H1 (cell line): ENCODE measurements at regions of chr7 and their contacts with region 1.

Region 1: DNA sequence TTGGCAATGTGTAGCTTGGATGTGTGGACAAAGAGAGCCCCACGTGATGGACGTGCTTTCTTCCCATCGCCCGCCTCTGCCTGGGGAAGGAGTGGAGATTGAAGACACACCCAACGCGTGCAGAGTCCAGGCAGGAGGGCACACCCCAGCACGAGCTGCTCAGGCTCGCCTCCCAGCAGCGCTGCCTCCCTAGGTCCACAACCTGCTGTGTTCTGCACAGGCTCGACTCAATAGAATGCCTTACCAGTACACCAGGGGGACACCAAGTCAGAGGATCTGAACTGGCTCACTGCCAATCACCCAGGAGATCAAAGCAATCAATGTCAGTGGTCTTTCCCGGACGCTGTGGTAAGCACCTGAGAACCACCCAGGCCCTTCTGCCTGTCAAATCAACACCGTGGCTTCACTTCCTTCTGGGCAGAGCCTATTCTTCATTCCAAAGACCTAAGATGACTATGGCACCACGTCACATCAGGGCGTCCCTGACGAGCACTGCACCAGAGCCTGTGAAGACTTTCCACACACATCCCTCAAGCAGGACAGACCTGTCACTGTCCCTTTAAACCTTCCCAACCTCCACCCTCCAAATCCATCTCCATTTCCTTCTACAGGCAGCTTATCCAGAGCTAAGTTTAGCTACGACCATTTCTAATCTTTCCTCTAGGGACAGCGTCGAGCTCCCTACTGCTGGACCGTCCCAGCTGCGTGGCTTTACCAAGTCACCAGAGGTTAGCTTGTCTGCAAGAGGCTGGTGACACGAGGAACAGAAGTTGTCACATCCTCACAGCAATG is 72.3 kb downstream of the AMZ1 start:
- DNase-seq: no peak
- H3K4me3 ChIP-seq: no peak overlapping the region
- H3K27ac ChIP-seq: no peak overlapping the region
- H3K4me1 ChIP-seq: peaks cover 0 to 11% (median 4%) of the 10 kb centered on the region in 4 experiments; a peak in 5 of 7 replicates
- H3K27me3 ChIP-seq: no peaks in the 10 kb centered on the region
- CTCF ChIP-seq: peak; percentile 62 to 91 (median 65)
- EP300 ChIP-seq: no peak
- POLR2A ChIP-seq: no peak
- RAD21 ChIP-seq: peak; percentile 63 to 68

Region 2: DNA sequence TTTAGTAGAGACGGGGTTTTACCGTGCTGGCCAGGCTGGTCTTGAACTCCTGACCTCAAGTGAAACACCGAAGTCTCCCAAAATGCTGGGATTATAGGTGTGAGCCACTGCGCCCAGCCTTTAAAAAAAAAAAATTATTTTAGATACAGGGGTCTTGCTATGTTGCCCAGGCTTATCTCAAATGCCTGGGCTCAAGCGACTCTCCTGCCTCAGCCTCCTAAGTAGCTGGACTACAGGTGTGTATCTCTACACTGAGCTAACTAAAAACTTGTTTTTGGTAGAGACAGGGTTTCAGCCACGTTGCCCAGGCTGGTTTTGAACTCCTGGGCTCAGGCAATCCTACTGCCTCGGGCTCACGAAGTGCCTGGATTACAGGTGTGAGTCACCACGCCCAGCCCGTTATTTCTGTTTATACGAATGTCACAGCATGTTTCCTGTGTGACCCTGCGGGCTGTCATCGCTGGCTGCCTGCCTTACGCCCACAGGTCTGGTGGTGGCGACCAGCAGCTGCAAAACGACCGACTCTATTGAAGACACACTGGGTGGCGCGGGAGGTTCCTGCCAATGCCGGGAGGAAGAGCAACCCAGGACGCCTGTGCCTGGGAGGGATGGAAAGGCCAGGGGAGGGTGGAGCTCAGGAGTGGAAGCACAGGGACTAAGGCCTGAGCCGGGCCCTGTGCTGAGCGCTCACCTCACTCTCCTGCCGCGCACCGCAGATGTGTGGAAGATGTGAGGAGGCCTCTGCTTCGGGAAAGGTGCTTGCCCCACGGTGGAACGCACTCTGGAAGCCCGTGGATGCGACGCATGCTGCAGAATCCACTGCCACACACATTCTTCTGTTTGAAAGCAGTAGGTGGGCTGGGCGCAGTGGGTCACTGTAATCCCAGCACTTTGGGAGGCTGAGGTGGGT is 39.5 kb before region 1 on chr7:
- CTCF ChIA-PET with region 1: interaction called, 18 read pairs
- POLR2A ChIA-PET with region 1: no interaction called
- DNase-seq: no peak
- H3K4me3 ChIP-seq: no peak overlapping the region
- H3K27ac ChIP-seq: no peak overlapping the region
- H3K4me1 ChIP-seq: no peaks in the 10 kb centered on the region; a peak in 4 of 7 replicates
- H3K27me3 ChIP-seq: no peaks in the 10 kb centered on the region
- CTCF ChIP-seq: peak in 2 of 3 experiments; percentile 6 to 14; a peak in 2 of 4 replicates
- EP300 ChIP-seq: no peak
- POLR2A ChIP-seq: no peak
- RAD21 ChIP-seq: peak in 1 of 2 experiments; percentile 40; a peak in 2 of 4 replicates

Region 3: DNA sequence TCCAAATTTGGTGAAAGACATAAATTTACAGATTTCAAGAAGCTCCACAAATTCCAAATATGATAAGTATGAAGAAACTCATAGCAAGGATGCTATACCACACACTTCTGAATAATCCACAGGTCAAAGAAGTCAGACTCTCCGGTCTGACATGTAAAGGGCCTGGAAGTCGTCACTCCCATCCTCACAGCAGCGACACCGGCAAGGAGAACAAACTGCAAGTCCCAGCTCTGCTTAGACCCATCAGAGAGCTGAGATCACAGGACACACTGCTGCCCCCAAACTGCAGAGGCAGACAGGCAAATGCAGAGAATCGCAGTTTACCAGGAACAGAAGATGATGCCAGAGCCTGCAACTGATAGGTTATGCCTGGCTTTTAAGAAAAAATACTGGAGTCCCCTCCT is 10.3 kb before region 1 on chr7:
- CTCF ChIA-PET with region 1: interaction called, 11 read pairs
- POLR2A ChIA-PET with region 1: no interaction called
- DNase-seq: no peak
- H3K4me3 ChIP-seq: no peak overlapping the region
- H3K27ac ChIP-seq: no peak overlapping the region
- H3K4me1 ChIP-seq: no peaks in the 10 kb centered on the region; a peak in 2 of 7 replicates
- H3K27me3 ChIP-seq: no peaks in the 10 kb centered on the region
- CTCF ChIP-seq: no peak
- EP300 ChIP-seq: no peak
- POLR2A ChIP-seq: no peak
- RAD21 ChIP-seq: no peak

Region 4: DNA sequence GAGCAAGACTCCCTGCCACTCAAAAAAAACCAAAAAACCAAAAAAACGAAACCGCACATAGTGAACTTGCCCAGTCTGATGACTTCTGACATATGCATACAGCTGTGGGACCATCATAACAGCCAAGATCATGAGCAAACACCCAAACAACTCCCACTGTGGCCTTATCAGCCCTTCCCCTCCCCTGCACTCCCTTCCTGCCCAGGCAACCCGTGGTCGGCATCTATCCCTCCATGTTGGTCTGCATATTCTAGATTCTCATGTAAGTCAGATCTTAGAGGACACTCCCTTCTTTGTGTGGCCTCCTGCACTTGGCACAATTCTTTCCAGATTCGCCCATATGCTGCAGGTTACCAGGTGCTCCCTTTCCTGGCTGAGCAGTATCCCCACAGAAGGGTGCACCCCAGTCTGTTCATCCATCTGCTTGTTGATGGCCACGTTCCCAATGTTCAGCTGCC is 11.0 kb after region 1 on chr7:
- CTCF ChIA-PET with region 1: interaction called, 14 read pairs
- POLR2A ChIA-PET with region 1: interaction called, 6 read pairs
- DNase-seq: no peak
- H3K4me3 ChIP-seq: no peak overlapping the region
- H3K27ac ChIP-seq: no peak overlapping the region
- H3K4me1 ChIP-seq: 0 out of 7 replicates have a peak, but pooled peaks cover 0 to 2% (median 0%) of the 10 kb centered on the region in 4 experiments
- H3K27me3 ChIP-seq: no peaks in the 10 kb centered on the region
- CTCF ChIP-seq: no peak
- EP300 ChIP-seq: no peak
- POLR2A ChIP-seq: no peak
- RAD21 ChIP-seq: no peak

Region 5: GRCh38 chr7:2779086-2779485 is 18.8 kb after region 1 on chr7:
- CTCF ChIA-PET with region 1: interaction called, 14 read pairs
- POLR2A ChIA-PET with region 1: interaction called, 3 read pairs
- DNase-seq: no peak
- H3K4me3 ChIP-seq: no peak overlapping the region
- H3K27ac ChIP-seq: no peak overlapping the region
- H3K4me1 ChIP-seq: peaks cover 0 to 5% (median 3%) of the 10 kb centered on the region in 4 experiments; a peak in 3 of 7 replicates
- H3K27me3 ChIP-seq: no peaks in the 10 kb centered on the region
- CTCF ChIP-seq: no peak
- EP300 ChIP-seq: no peak
- POLR2A ChIP-seq: no peak
- RAD21 ChIP-seq: no peak

Region 6: GRCh38 chr7:2953588-2954407 is 193.5 kb after region 1 on chr7:
- CTCF ChIA-PET with region 1: no interaction called
- POLR2A ChIA-PET with region 1: no interaction called
- DNase-seq: no peak
- H3K4me3 ChIP-seq: no peak overlapping the region
- H3K27ac ChIP-seq: no peak overlapping the region
- H3K4me1 ChIP-seq: no peaks in the 10 kb centered on the region
- H3K27me3 ChIP-seq: no peaks in the 10 kb centered on the region
- CTCF ChIP-seq: no peak
- EP300 ChIP-seq: no peak
- POLR2A ChIP-seq: no peak
- RAD21 ChIP-seq: no peak